ENCODE measurements at regions of chr19 and their contacts with region 1.

Region 1: GRCh38 chr19:14405758-14406644 is 13.1 kb downstream of the DDX39A start:
- DNase-seq: peak; percentile 80
- H3K4me3 ChIP-seq: peak overlapping the region; percentile 17 to 25
- H3K27ac ChIP-seq: peak overlapping the region; percentile 64 to 74
- H3K4me1 ChIP-seq: peaks cover 3% of the 10 kb centered on the region
- H3K27me3 ChIP-seq: no peaks in the 10 kb centered on the region
- CTCF ChIP-seq: peak; percentile 85 to 95 (median 90)
- POLR2A ChIP-seq: no peak

Region 2: GRCh38 chr19:14136509-14137281 is 269.3 kb before region 1 on chr19 and contains the start of gene ASF1B:
- intact Hi-C with region 1: loop called (anchors 5 kb)
- DNase-seq: peak; percentile 99
- H3K4me3 ChIP-seq: peak within 1 kb of the TSS; percentile 60 to 77
- H3K27ac ChIP-seq: peak within 1 kb of the TSS; percentile 93 to 98
- H3K4me1 ChIP-seq: peaks cover 11% of the 10 kb centered on the region
- H3K27me3 ChIP-seq: no peaks in the 10 kb centered on the region
- CTCF ChIP-seq: peak; percentile 91 to 100 (median 96)
- POLR2A ChIP-seq: peak; percentile 87
- total RNA-seq, gene ASF1B: 5.1 to 19.7 TPM

Region 3: GRCh38 chr19:14363183-14364097 is 42.6 kb before region 1 on chr19:
- intact Hi-C with region 1: loop called (anchors 5 kb)
- DNase-seq: peak; percentile 16
- H3K4me3 ChIP-seq: peak overlapping the region; percentile 16 to 21
- H3K27ac ChIP-seq: peak overlapping the region; percentile 15 to 54
- H3K4me1 ChIP-seq: no peaks in the 10 kb centered on the region
- H3K27me3 ChIP-seq: no peaks in the 10 kb centered on the region
- CTCF ChIP-seq: no peak
- POLR2A ChIP-seq: no peak

Region 4: GRCh38 chr19:14479975-14480699 is 74.1 kb after region 1 on chr19:
- intact Hi-C with region 1: no loop called
- DNase-seq: no peak
- H3K4me3 ChIP-seq: no peak overlapping the region
- H3K27ac ChIP-seq: no peak overlapping the region
- H3K4me1 ChIP-seq: no peaks in the 10 kb centered on the region
- H3K27me3 ChIP-seq: no peaks in the 10 kb centered on the region
- CTCF ChIP-seq: peak in 3 of 4 experiments; percentile 40 to 69 (median 51)
- POLR2A ChIP-seq: no peak